ENCODE measurements at regions of chrX and their contacts with region 1.

Region 1: DNA sequence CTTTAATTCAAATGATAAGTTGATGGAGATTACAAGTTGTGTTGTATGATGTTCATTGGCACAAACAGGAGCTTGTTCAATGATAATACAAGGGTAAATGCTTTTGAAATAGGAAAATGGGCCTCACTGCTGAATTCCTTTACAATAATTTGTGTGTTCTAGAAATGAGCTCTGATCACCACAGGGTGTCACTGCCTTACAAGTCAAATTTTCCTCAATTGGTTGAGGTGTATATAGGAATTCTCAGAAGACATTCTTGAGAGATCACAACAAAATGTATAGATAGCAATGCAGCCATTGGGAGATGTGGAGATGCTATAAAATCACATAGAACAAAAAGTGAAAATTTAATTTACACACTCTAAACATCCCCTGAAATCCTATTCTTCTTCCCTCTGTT is 49.6 kb downstream of the KLF8 start:
- DNase-seq: no peak
- H3K4me3 ChIP-seq: no peak overlapping the region
- H3K27ac ChIP-seq: no peak overlapping the region
- H3K4me1 ChIP-seq: no peaks in the 10 kb centered on the region
- H3K27me3 ChIP-seq: no peaks in the 10 kb centered on the region
- CTCF ChIP-seq: no peak
- EP300 ChIP-seq: no peak
- POLR2A ChIP-seq: no peak
- RAD21 ChIP-seq: peak; percentile 31 to 48

Region 2: DNA sequence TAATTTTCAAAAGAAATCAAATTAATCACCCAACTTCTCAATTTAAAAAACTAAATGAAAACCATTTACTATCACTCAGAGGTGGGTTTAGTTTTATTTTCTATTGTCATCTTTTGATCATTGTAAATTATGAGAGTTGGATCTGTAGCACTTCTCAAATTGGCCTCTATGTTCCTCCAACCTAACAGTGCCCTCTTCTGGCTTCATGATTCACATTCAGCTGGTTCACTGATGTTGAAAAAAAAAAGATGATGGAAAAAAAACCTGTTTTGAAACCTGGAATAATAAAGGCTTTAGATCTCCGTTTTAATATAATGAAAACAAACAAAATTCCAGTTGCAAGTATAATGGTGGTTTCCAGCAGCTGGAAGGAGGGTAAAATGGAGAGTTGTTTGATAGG is 444.8 kb after region 1 on chrX:
- CTCF ChIA-PET with region 1: interaction called, 11 read pairs
- POLR2A ChIA-PET with region 1: no interaction called
- DNase-seq: no peak
- H3K4me3 ChIP-seq: no peak overlapping the region
- H3K27ac ChIP-seq: no peak overlapping the region
- H3K4me1 ChIP-seq: no peaks in the 10 kb centered on the region
- H3K27me3 ChIP-seq: no peaks in the 10 kb centered on the region
- CTCF ChIP-seq: peak in 2 of 3 experiments; percentile 39 to 42; a peak in 2 of 4 replicates
- EP300 ChIP-seq: no peak
- POLR2A ChIP-seq: no peak
- RAD21 ChIP-seq: peak; percentile 68